Calu3 (cell line): ENCODE measurements at regions of chr4 and their contacts with region 1.

Region 1: DNA sequence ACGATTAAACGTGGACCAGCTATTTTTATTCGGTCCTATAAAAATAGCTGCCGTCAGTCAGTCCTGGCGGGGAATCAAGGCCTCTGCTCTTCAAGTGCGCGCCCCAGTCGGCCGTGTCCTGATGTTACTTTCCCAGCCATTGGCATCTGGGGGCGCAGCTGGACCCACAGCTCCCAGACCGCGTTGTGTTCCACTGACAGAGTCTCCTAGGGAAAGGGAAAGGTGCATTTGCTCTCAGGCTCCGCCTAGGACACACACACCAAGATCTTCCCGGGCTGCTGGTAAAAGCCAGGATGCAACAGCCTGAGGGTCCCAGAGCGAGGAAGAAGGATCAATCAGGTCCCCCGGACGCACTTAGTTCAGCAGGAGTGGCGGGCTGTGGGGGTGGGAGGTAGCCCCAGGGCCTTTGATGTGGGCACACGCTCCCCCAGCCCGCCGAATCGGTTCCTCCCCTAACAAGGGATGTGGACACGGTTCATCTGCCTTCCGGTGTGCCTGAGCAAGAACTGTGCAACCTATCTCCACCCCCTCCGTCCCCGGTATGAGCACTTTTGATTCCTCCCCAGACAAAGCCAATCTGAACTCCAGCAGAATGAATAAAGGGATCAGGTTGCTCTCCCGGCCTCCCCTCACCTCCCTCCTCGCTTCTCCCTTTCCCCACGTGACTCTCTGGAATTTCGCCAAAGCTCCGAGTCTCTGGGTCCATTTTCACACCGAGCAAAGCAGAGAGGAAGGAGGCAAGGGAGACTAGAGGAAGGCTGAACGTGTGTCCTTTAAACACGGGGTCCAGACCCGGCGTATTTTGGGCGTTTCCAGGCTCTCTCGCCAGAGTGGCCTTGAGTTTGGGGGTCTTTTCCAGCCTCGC is 626 bp upstream of the FRAS1 start:
- DNase-seq: peak; percentile 74
- H3K4me3 Mint-ChIP-seq: peak overlapping the region; percentile 88
- H3K27ac Mint-ChIP-seq: peak overlapping the region; percentile 74
- H3K4me1 Mint-ChIP-seq: no peaks in the 10 kb centered on the region
- H3K27me3 Mint-ChIP-seq: no peaks in the 10 kb centered on the region
- CTCF ChIP-seq: no peak

Region 2: GRCh38 chr4:77586951-77587383 is 469.5 kb before region 1 on chr4:
- CTCF ChIA-PET with region 1: no interaction called
- intact Hi-C with region 1: no loop called
- DNase-seq: peak; percentile 33
- H3K4me3 Mint-ChIP-seq: peak overlapping the region; percentile 26
- H3K27ac Mint-ChIP-seq: no peak overlapping the region
- H3K4me1 Mint-ChIP-seq: peaks cover 23% of the 10 kb centered on the region
- H3K27me3 Mint-ChIP-seq: no peaks in the 10 kb centered on the region
- CTCF ChIP-seq: no peak

Region 3: GRCh38 chr4:77994194-77994721 is 62.2 kb before region 1 on chr4:
- CTCF ChIA-PET with region 1: interaction called, 5 read pairs
- intact Hi-C with region 1: loop called (anchors 2 kb)
- DNase-seq: peak; percentile 55
- H3K4me3 Mint-ChIP-seq: no peak overlapping the region
- H3K27ac Mint-ChIP-seq: no peak overlapping the region
- H3K4me1 Mint-ChIP-seq: peaks cover 13% of the 10 kb centered on the region
- H3K27me3 Mint-ChIP-seq: no peaks in the 10 kb centered on the region
- CTCF ChIP-seq: no peak

Region 4: DNA sequence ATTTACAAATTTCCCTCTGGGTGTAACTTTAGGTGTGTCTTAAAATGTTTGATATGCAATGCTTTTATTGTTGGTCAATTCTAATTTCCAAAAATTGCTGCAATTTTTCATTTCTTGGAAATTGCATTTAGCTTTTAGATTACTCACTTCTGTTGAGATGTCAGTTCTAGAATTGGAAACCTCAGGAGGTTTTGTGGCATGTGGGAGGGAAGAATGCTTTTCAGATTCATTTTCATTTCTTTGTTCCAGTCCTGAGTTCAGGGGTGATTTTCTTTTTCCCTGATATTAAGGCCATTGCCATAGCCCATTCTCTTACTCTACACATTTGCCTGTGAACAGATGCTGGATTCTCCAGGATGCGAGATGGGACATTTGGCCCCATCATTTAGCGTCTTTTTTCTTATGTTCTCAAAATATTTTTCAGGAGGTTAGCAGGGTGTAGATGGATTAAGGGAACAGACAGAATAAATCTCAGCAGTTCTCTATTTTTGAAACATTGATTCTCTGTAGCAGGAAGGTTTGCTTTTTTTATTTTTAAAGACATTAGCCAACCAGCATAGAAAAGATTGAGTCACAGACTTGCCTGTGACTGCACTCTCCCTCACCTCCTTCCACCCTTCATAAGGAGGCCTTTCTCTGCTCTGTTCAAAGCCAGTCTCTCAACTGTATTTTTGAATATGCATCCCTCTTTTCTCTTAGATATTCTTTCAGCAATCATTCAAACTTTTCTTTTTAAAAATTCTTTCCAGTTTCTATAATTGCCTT is 256.7 kb after region 1 on chr4:
- CTCF ChIA-PET with region 1: interaction called, 3 read pairs
- intact Hi-C with region 1: loop called (anchors 10 kb)
- DNase-seq: no peak
- H3K4me3 Mint-ChIP-seq: no peak overlapping the region
- H3K27ac Mint-ChIP-seq: no peak overlapping the region
- H3K4me1 Mint-ChIP-seq: peaks cover 18% of the 10 kb centered on the region
- H3K27me3 Mint-ChIP-seq: no peaks in the 10 kb centered on the region
- CTCF ChIP-seq: no peak

Region 5: GRCh38 chr4:78386679-78387078 is 330.2 kb after region 1 on chr4:
- CTCF ChIA-PET with region 1: no interaction called
- intact Hi-C with region 1: loop called (anchors 5 kb)
- DNase-seq: no peak
- H3K4me3 Mint-ChIP-seq: no peak overlapping the region
- H3K27ac Mint-ChIP-seq: no peak overlapping the region
- H3K4me1 Mint-ChIP-seq: no peaks in the 10 kb centered on the region
- H3K27me3 Mint-ChIP-seq: no peaks in the 10 kb centered on the region
- CTCF ChIP-seq: no peak

Region 6: GRCh38 chr4:78459327-78459726 is 402.8 kb after region 1 on chr4:
- CTCF ChIA-PET with region 1: no interaction called
- intact Hi-C with region 1: no loop called
- DNase-seq: no peak
- H3K4me3 Mint-ChIP-seq: no peak overlapping the region
- H3K27ac Mint-ChIP-seq: no peak overlapping the region
- H3K4me1 Mint-ChIP-seq: no peaks in the 10 kb centered on the region
- H3K27me3 Mint-ChIP-seq: no peaks in the 10 kb centered on the region
- CTCF ChIP-seq: no peak

Region 7: GRCh38 chr4:78517050-78517652 is 460.7 kb after region 1 on chr4:
- CTCF ChIA-PET with region 1: interaction called, 7 read pairs
- intact Hi-C with region 1: loop called (anchors 1 kb)
- DNase-seq: no peak
- H3K4me3 Mint-ChIP-seq: no peak overlapping the region
- H3K27ac Mint-ChIP-seq: no peak overlapping the region
- H3K4me1 Mint-ChIP-seq: no peaks in the 10 kb centered on the region
- H3K27me3 Mint-ChIP-seq: no peaks in the 10 kb centered on the region
- CTCF ChIP-seq: peak; percentile 24